Activated T-helper 1 cell treated with anti-CD3 and anti-CD28 coated beads, Interleukin-12 subunit alpha, Interleukin-12 subunit beta, Interleukin-2, Interleukin-4 antibody, amounts not matched to agents 30 ng/mL and 10 ng/mL and 1 ng/mL, durations not matched to agents 14 hours and 24 hours and 36 hours (primary cell): ENCODE measurements at regions of chr9 and their contacts with region 1.

Region 1: GRCh38 chr9:73183917-73184861 is 32.5 kb downstream of the ANXA1 start:
- DNase-seq: no peak
- H3K4me3 Mint-ChIP-seq: no peak overlapping the region
- H3K27ac Mint-ChIP-seq: no peak overlapping the region
- H3K4me1 Mint-ChIP-seq: peaks cover 13% of the 10 kb centered on the region
- H3K27me3 Mint-ChIP-seq: peaks cover 25% of the 10 kb centered on the region

Region 2: GRCh38 chr9:72280913-72281500 is 903.2 kb before region 1 on chr9:
- intact Hi-C with region 1: loop called (anchors 5 kb)
- DNase-seq: peak; percentile 52
- H3K4me3 Mint-ChIP-seq: no peak overlapping the region
- H3K27ac Mint-ChIP-seq: peak overlapping the region; percentile 36
- H3K4me1 Mint-ChIP-seq: no peaks in the 10 kb centered on the region
- H3K27me3 Mint-ChIP-seq: peaks cover 6% of the 10 kb centered on the region

Region 3: DNA sequence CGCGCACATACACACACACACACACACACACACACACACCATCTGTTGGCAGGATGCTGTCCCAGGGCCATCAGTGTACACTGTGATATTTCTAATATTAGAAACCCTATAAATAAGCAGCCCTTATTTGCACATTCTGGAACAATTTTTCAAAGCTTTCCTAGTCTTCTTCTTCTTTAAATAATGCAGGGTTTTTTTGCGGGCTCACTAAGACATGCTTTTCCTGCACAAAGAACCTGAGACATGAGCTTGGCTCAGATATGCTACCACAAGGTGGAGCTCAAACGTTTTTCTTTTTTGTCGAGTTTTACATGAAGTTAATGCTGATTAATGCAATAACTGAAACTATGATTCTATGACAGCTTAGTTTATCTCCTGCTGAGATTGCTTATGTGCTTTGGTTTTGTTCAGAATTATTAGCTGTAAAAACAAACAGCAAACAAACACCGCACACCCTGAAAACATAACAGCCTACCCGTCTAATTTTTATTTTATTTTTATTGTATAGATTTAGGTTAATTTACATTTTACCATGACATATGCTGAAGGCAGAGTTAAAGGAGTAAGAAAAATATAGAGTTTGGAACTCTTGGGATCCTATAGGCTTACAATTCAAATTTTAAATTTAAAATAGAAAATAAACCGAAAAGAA is 327.1 kb before region 1 on chr9:
- intact Hi-C with region 1: loop called (anchors 5 kb)
- DNase-seq: no peak
- H3K4me3 Mint-ChIP-seq: no peak overlapping the region
- H3K27ac Mint-ChIP-seq: no peak overlapping the region
- H3K4me1 Mint-ChIP-seq: no peaks in the 10 kb centered on the region
- H3K27me3 Mint-ChIP-seq: peaks cover 4% of the 10 kb centered on the region

Region 4: DNA sequence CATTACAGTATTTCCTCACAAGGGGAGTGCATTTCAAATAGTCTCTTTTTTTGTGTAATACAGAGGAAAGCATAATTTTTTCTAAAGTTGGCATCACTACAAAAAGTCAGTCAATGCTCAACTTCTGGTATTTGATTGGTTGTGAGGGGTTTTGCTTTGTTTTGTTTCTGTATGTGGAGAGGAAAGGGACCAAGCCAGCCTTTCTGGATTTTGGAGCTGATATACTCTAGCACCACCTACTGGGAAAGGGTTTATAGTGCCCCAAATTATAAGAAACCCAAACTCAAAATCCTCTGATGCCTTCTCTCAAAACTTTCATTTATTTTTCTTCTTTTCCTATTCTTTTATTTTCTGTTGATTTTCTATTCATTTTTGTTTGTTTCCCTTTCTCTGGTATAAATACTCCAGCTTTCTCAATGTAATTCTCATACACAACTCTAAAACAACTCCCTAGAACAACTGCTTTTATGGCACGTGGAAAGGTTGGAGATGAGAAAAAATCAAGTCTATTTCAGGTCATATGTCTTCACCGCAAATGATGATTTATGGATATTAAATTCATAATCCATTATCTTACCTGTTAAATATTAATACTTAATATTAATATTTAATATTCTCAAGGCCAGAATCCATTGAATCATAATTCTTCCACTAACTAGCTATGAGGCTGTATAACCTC is 102.1 kb before region 1 on chr9:
- intact Hi-C with region 1: loop called (anchors 1 kb)
- DNase-seq: no peak
- H3K4me3 Mint-ChIP-seq: no peak overlapping the region
- H3K27ac Mint-ChIP-seq: no peak overlapping the region
- H3K4me1 Mint-ChIP-seq: no peaks in the 10 kb centered on the region
- H3K27me3 Mint-ChIP-seq: peaks cover 22% of the 10 kb centered on the region

Region 5: DNA sequence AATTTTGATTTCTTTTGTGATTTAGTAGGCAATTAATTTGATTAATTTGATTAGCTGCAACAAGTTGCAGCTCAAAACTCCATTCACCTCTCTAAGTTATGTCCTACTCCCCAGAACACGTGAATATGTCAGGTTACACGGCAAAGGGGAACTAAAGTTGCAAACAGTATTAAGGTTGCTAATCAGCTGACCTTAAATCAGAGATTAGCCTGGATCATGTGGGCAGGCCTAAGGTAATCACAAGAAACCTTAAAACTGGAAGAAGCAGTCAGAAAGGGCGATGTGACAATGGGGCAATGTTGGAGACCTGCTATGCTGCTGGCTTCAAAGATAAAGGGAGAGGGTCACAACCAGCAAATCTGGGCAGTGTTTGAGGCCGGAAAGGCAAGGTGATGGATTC is 79.8 kb before region 1 on chr9:
- intact Hi-C with region 1: loop called (anchors 1 kb)
- DNase-seq: no peak
- H3K4me3 Mint-ChIP-seq: no peak overlapping the region
- H3K27ac Mint-ChIP-seq: no peak overlapping the region
- H3K4me1 Mint-ChIP-seq: no peaks in the 10 kb centered on the region
- H3K27me3 Mint-ChIP-seq: peaks cover 19% of the 10 kb centered on the region

Region 6: DNA sequence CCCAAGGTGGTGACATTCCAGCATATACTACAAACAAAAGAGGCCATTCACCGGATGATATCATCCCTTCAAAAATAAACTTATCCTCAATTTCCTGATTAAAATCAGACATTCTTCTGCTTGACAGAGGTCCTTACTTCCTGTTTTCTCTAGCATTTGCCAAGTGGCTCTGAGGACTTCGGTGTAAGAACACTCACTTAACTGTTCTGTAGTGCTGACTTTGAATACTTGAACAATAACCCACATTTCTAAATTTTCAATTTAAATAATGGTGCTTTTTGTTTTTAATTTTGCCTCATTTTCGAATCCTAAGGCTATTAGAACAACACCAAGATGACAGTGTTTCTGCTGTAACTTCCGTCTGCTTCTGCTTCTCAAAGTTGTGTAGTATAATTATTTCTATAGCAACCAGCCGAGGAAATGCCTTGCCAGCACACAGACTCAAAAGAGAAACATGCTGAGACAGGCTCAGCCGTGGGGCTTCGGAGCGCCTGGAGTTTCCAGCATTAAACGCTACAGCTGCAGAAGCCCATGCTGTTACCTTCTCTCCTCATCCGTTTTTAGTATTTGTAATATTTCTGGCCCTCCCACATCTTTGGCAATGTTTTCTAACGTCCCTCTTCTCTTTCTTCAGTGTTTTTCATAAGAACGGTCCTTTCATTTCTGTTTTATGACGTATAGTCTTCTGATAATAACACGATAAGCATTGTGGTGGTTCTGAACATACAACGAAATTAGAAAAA is 52.0 kb before region 1 on chr9:
- intact Hi-C with region 1: loop called (anchors 1 kb)
- DNase-seq: peak; percentile 73
- H3K4me3 Mint-ChIP-seq: peak overlapping the region; percentile 83
- H3K27ac Mint-ChIP-seq: peak overlapping the region; percentile 98
- H3K4me1 Mint-ChIP-seq: peaks cover 42% of the 10 kb centered on the region
- H3K27me3 Mint-ChIP-seq: no peaks in the 10 kb centered on the region

Region 7: DNA sequence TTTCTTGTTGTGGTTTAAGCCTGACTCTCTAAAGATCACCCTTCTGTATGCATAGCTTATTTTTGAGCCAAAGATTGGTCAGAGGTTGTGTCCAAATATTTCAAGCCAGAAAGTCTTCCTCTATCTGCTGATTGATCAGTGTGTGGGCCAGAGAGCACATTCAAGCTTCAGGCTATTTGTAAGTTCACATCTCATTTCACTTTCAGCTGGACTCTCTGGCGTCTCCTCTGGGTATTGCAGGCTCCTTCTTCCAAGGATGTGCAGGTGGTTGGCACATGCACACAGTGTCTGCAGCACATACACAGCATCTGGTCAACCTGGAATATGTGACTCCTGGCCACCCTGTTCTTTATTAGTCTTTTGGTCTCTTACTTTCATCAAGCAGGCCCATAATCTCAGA is 483.5 kb after region 1 on chr9:
- intact Hi-C with region 1: no loop called
- DNase-seq: no peak
- H3K4me3 Mint-ChIP-seq: no peak overlapping the region
- H3K27ac Mint-ChIP-seq: no peak overlapping the region
- H3K4me1 Mint-ChIP-seq: no peaks in the 10 kb centered on the region
- H3K27me3 Mint-ChIP-seq: no peaks in the 10 kb centered on the region